CD8-positive, alpha-beta T cell (primary cell): ENCODE measurements at regions of chr1 and their contacts with region 1.

Region 1: DNA sequence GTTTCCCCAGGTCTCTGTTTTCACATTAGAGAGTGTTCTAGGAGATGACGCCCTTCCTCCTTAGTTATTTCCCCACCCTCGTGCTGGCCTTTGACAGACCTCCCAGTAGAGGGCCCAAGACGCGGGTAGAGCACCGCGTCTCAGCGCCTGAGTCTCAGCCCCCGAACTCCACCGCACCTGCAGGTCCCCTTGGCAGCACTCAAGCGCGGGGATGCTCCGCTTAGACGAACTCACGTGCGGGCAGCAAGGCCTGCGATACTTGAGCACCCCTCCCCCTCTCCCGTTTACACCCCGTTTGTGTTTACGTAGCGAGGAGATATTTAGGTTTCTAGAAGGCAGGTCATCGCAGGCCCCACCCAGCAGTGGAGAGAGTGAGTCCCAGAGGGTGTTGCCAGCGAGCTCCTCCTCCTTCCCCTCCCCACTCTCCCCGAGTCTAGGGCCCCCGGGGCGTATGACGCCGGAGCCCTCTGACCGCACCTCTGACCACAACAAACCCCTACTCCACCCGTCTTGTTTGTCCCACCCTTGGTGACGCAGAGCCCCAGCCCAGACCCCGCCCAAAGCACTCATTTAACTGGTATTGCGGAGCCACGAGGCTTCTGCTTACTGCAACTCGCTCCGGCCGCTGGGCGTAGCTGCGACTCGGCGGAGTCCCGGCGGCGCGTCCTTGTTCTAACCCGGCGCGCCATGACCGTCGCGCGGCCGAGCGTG is at the start of gene CD55:
- DNase-seq: peak; percentile 98 to 100 (median 99)
- ATAC-seq: peak; percentile 88
- H3K4me3 ChIP-seq: peak within 1 kb of the TSS; percentile 77 to 89
- H3K4me3 Mint-ChIP-seq: peak within 1 kb of the TSS; percentile 98
- H3K27ac ChIP-seq: peak within 1 kb of the TSS; percentile 94 to 98
- H3K27ac Mint-ChIP-seq: peak within 1 kb of the TSS; percentile 99
- H3K4me1 ChIP-seq: peaks cover 21% of the 10 kb centered on the region
- H3K4me1 Mint-ChIP-seq: peaks cover 44% of the 10 kb centered on the region
- H3K27me3 ChIP-seq: no peaks in the 10 kb centered on the region
- H3K27me3 Mint-ChIP-seq: no peaks in the 10 kb centered on the region
- CTCF ChIP-seq: peak; percentile 36
- total RNA-seq, gene CD55: 256 to 261 TPM

Region 2: DNA sequence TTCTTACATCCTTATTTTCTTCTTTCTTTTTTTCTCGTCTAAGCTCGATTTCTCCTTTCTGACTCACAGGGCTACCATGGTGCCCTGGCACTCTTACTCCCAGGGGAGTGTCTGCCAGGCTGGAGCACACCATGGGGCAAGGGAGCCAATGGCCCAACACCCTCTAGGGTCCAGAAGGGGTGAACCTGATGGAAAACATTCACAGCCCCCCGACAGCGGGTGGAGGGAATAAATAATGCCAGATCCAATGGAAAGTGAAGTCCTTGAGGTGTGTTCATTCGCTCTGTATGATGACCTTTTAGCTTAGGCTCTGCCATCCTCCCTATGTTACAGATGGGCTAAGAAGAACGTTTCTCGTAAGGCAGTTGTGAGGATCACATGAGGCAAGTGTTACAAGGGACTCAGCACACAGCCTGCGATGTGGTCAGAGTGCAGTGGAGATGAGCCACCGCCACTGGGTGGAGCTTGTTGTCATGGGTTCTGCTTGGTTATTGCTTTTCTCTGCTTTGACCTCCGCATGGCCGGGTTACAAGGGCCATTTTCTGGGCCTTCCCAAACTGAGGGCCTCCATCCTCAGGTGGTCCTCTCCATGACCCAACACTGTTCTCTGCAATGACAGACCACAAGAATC is 396.0 kb before region 1 on chr1:
- CTCF ChIA-PET with region 1: no interaction called
- POLR2A ChIA-PET with region 1: interaction called, 10 read pairs
- intact Hi-C with region 1: loop called (anchors 2 to 5 kb)
- DNase-seq: peak; percentile 49 to 90 (median 70)
- ATAC-seq: peak; percentile 40
- H3K4me3 ChIP-seq: no peak overlapping the region
- H3K4me3 Mint-ChIP-seq: no peak overlapping the region
- H3K27ac ChIP-seq: peak overlapping the region; percentile 46 to 95
- H3K27ac Mint-ChIP-seq: no peak overlapping the region
- H3K4me1 ChIP-seq: peaks cover 62% of the 10 kb centered on the region
- H3K4me1 Mint-ChIP-seq: peaks cover 51% of the 10 kb centered on the region
- H3K27me3 ChIP-seq: no peaks in the 10 kb centered on the region
- H3K27me3 Mint-ChIP-seq: no peaks in the 10 kb centered on the region
- CTCF ChIP-seq: no peak

Region 3: GRCh38 chr1:207181838-207182237 is 139.4 kb before region 1 on chr1:
- CTCF ChIA-PET with region 1: interaction called, 10 read pairs
- POLR2A ChIA-PET with region 1: no interaction called
- intact Hi-C with region 1: loop called in 1 of 2 experiments (anchors 5 kb)
- DNase-seq: peak in 2 of 9 experiments; percentile 24 to 46
- ATAC-seq: no peak
- H3K4me3 ChIP-seq: no peak overlapping the region
- H3K4me3 Mint-ChIP-seq: no peak overlapping the region
- H3K27ac ChIP-seq: no peak overlapping the region
- H3K27ac Mint-ChIP-seq: no peak overlapping the region
- H3K4me1 ChIP-seq: no peaks in the 10 kb centered on the region
- H3K4me1 Mint-ChIP-seq: no peaks in the 10 kb centered on the region
- H3K27me3 ChIP-seq: no peaks in the 10 kb centered on the region
- H3K27me3 Mint-ChIP-seq: peaks cover 4% of the 10 kb centered on the region
- CTCF ChIP-seq: no peak

Region 4: DNA sequence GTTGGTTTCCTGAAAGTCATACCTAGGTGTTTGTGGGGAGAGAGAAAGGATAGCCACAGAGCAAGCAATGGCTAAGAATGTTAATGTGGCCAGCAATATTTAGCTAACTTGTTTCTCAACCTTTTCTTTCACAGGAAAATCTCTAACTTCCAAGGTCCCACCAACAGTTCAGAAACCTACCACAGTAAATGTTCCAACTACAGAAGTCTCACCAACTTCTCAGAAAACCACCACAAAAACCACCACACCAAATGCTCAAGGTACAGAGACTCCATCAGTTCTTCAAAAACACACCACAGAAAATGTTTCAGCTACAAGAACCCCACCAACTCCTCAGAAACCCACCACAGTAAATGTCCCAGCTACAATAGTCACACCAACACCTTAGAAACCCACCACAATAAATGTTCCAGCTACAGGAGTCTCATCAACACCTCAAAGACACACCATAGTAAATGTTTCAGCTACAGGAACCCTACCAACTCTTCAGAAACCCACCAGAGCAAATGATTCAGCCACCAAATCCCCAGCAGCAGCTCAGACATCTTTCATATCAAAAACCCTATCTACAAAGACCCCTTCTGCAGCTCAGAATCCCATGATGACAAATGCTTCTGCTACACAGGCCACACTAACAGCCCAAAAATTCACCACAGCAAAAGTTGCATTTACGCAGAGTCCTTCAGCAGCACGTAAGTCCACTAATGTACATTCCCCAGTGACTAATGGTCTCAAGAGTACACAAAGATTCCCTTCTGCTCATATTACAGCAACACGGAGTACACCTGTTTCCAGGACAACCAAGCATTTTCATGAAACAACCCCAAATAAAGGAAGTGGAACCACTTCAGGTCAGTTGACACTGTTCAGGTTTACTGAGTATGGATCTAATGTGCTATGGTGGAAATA is 15.6 kb after region 1 on chr1:
- CTCF ChIA-PET with region 1: interaction called, 15 read pairs
- POLR2A ChIA-PET with region 1: interaction called, 90 read pairs
- intact Hi-C with region 1: loop called in 1 of 2 experiments (anchors 1 kb)
- DNase-seq: peak in 6 of 9 experiments; percentile 17 to 88 (median 52)
- ATAC-seq: peak; percentile 61
- H3K4me3 ChIP-seq: peak overlapping the region in 1 of 2 experiments; percentile 42
- H3K4me3 Mint-ChIP-seq: peak overlapping the region; percentile 59
- H3K27ac ChIP-seq: peak overlapping the region; percentile 37 to 62
- H3K27ac Mint-ChIP-seq: peak overlapping the region; percentile 89
- H3K4me1 ChIP-seq: peaks cover 63% of the 10 kb centered on the region
- H3K4me1 Mint-ChIP-seq: peaks cover 68% of the 10 kb centered on the region
- H3K27me3 ChIP-seq: no peaks in the 10 kb centered on the region
- H3K27me3 Mint-ChIP-seq: no peaks in the 10 kb centered on the region
- CTCF ChIP-seq: no peak

Region 5: DNA sequence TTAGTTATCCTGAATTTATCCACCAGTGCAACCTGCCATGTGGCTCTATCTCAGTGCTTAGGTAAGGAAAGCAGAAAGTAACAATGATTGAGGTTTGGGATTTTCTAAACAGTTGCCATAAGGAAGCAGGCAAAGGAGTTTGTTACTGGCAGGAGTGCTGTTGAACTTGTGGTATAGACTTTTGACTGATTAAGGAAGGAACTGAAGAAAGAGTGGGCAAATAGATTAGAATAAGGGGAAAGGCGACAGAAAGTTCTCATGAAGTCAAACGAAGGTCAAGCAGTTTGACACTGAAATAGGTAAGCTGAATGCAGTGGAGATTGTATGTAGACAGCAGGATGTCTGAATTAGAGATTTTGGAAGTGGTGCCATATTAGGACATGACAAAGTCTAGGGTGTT is 108.7 kb after region 1 on chr1:
- CTCF ChIA-PET with region 1: no interaction called
- POLR2A ChIA-PET with region 1: no interaction called
- intact Hi-C with region 1: no loop called
- DNase-seq: no peak
- ATAC-seq: no peak
- H3K4me3 ChIP-seq: no peak overlapping the region
- H3K4me3 Mint-ChIP-seq: no peak overlapping the region
- H3K27ac ChIP-seq: no peak overlapping the region
- H3K27ac Mint-ChIP-seq: no peak overlapping the region
- H3K4me1 ChIP-seq: no peaks in the 10 kb centered on the region
- H3K4me1 Mint-ChIP-seq: no peaks in the 10 kb centered on the region
- H3K27me3 ChIP-seq: peaks cover 0 to 2% of the 10 kb centered on the region in 2 experiments
- H3K27me3 Mint-ChIP-seq: peaks cover 5% of the 10 kb centered on the region
- CTCF ChIP-seq: no peak

Region 6: DNA sequence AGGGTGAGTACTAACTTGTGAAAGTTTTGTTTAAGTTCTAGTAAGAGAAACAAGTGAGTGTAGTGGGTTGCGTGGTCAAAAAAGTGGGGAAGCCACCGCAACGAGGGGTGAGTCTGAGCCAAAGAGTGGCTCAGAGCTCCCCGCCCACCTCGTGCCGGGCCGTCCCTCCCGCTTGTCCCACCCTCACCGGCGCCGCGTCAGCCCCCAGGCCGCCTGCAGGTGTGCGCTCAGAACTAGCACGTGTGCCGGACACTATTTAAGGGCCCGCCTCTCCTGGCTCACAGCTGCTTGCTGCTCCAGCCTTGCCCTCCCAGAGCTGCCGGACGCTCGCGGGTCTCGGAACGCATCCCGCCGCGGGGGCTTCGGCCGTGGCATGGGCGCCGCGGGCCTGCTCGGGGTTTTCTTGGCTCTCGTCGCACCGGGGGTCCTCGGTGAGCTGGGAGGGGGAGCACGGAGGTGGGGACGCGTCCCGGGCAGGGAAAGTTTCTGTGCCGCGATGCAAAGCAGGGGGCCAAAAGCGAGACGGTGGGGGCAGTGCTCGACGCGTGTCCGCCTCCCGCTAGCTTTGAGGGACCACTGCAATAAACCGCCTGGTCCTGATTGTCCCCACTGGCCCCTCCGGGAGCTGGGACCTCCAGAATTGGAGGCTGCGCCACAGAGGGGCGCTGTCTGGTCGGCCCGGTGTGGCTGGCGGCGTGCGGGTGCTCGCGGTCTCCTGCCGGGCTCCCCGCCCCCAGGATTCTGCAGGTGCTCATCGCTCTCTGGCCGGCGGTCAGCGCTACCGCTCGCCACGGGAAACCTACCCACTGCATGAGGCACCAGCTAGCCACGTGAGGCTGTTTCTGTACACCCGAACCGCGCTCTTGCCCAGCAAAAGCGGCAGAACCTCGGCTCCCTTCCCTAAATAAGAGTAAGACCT is 133.1 kb after region 1 on chr1 and contains the start of gene CR2:
- CTCF ChIA-PET with region 1: interaction called, 5 read pairs
- POLR2A ChIA-PET with region 1: interaction called, 6 read pairs
- intact Hi-C with region 1: loop called (anchors 2 to 5 kb)
- DNase-seq: peak in 8 of 9 experiments; percentile 1 to 73 (median 58)
- ATAC-seq: peak; percentile 72
- H3K4me3 ChIP-seq: peak within 1 kb of the TSS; percentile 49 to 59
- H3K4me3 Mint-ChIP-seq: peak within 1 kb of the TSS; percentile 77
- H3K27ac ChIP-seq: peak within 1 kb of the TSS in 1 of 2 experiments; percentile 7
- H3K27ac Mint-ChIP-seq: peak within 1 kb of the TSS; percentile 64
- H3K4me1 ChIP-seq: peaks cover 38% of the 10 kb centered on the region
- H3K4me1 Mint-ChIP-seq: peaks cover 14% of the 10 kb centered on the region
- H3K27me3 ChIP-seq: peaks cover 0 to 5% of the 10 kb centered on the region in 2 experiments
- H3K27me3 Mint-ChIP-seq: peaks cover 13% of the 10 kb centered on the region
- CTCF ChIP-seq: peak; percentile 60
- total RNA-seq, gene CR2: 5.2 to 5.7 TPM

Region 7: GRCh38 chr1:207751790-207752455 is 430.7 kb after region 1 on chr1 and contains the start of gene CD46:
- CTCF ChIA-PET with region 1: no interaction called
- POLR2A ChIA-PET with region 1: no interaction called
- intact Hi-C with region 1: loop called in 1 of 2 experiments (anchors 10 kb)
- DNase-seq: peak; percentile 85 to 97 (median 94)
- ATAC-seq: peak; percentile 95
- H3K4me3 ChIP-seq: peak within 1 kb of the TSS; percentile 76 to 91
- H3K4me3 Mint-ChIP-seq: peak within 1 kb of the TSS; percentile 100
- H3K27ac ChIP-seq: peak within 1 kb of the TSS; percentile 58 to 90
- H3K27ac Mint-ChIP-seq: peak within 1 kb of the TSS; percentile 97
- H3K4me1 ChIP-seq: peaks cover 51% of the 10 kb centered on the region
- H3K4me1 Mint-ChIP-seq: peaks cover 81% of the 10 kb centered on the region
- H3K27me3 ChIP-seq: no peaks in the 10 kb centered on the region
- H3K27me3 Mint-ChIP-seq: no peaks in the 10 kb centered on the region
- CTCF ChIP-seq: no peak
- total RNA-seq, gene CD46: 108 to 109 TPM